ENCODE measurements at regions of chr18 and their contacts with region 1.

Region 1: DNA sequence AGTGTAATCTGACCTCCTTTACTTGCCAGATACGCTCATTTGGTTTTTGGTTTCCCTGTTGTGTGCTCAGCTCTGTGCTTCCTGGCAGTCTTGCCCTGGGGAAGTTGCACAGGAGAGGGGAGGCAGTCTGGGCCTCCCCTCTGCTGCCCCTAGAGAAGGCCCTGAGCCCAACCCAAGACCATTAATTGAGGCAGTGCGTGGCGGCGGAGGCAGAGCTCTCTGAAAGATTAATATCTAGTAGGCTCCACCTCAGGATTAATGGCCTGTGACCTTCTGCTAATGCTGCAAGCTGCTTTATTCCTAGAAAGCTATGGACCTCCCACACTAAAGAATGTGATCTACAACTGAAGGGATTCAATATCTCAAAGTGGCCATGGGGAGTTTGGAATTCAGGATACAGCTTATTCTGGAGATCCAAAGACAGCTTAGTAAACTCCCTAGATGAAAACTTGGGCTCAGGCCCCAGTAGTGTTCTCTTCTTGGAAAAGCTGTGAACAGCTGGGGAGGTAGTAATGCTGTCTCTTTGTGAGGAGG is 41.4 kb upstream of the MAPRE2 start:
- DNase-seq: no peak
- ATAC-seq: peak in 6 of 8 donors; percentile 38 to 66 (median 54)
- H3K4me3 ChIP-seq: no peak overlapping the region
- H3K27ac ChIP-seq: no peak overlapping the region
- H3K4me1 ChIP-seq: peaks cover 0 to 4% (median 0%) of the 10 kb centered on the region in 9 donors
- H3K27me3 ChIP-seq: no peaks in the 10 kb centered on the region
- CTCF ChIP-seq: no peak

Region 2: GRCh38 chr18:35040988-35041814 is 41.4 kb after region 1 on chr18 and contains the start of gene MAPRE2:
- intact Hi-C with region 1: no loop called
- DNase-seq: peak; percentile 98 to 99
- ATAC-seq: peak; percentile 96 to 98 (median 97)
- H3K4me3 ChIP-seq: peak within 1 kb of the TSS; percentile 65 to 94 (median 82)
- H3K27ac ChIP-seq: peak within 1 kb of the TSS; percentile 63 to 92 (median 88)
- H3K4me1 ChIP-seq: peaks cover under 1 to 67% (median 44%) of the 10 kb centered on the region in 9 donors
- H3K27me3 ChIP-seq: no peaks in the 10 kb centered on the region
- CTCF ChIP-seq: peak in 1 of 9 donors; percentile 9
- total RNA-seq, gene MAPRE2: 63.9 to 211 (median 137) TPM

Region 3: GRCh38 chr18:35355140-35355618 is 355.4 kb after region 1 on chr18:
- intact Hi-C with region 1: loop called in 5 of 10 experiments (anchors 5 to 10 kb)
- DNase-seq: peak; percentile 54 to 75
- ATAC-seq: peak; percentile 87 to 99 (median 96)
- H3K4me3 ChIP-seq: peak overlapping the region in 4 of 10 donors; percentile 11 to 32 (median 30)
- H3K27ac ChIP-seq: no peak overlapping the region
- H3K4me1 ChIP-seq: peaks cover 0 to 8% (median 0%) of the 10 kb centered on the region in 9 donors
- H3K27me3 ChIP-seq: no peaks in the 10 kb centered on the region
- CTCF ChIP-seq: peak; percentile 51 to 85 (median 78)

Measured in heart right ventricle (tissue), 16 donors.